HEK293 (cell line): ENCODE measurements at regions of chr10 and their contacts with region 1.

Region 1: DNA sequence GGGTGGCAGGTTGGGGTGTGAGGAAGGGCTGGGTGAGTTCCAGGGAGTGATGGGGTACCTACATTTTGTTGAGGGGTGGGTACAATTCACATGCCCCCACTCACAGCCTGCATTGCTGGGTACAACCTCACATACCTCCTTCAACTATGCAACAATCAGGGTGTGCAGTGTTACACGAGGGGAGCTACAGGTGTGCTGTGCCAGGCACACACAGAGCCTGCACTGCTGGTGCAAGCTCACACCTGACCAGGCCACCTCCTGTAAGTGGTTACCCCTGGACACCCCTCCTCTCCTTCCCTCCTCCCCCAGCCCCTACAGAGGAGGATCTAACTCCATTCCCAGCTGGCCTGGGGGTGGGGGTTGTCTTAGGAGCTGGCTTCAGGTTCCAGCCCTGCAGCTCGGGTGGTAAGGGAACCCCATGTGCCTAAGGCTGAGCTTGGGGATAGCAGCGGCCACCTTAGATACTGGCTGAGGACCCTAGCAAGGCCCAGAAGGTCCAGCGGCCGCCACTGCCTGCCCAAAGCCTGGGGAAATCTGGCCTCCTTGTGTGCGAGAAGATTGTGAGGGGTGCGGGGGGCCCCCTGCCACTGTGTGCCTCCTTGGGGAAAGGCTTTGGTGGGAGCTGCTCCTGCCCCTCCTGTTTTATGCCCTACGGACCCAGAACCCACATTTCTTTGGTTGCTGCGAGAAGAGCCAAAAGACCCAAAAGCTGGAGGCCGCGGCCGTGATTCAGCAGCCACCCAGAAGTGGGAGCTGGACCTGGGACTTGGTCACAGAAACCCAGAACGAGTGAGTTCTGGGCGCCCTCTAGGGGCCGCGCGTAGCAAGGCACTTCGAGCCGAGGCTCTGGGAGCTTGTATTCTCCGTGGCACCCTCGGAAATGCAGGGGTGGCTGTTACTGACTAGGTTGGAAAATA is 10.8 kb downstream of the TLX1 start:
- H3K4me3 ChIP-seq: no peak overlapping the region
- H3K27ac ChIP-seq: no peak overlapping the region
- H3K4me1 ChIP-seq: no peaks in the 10 kb centered on the region
- CTCF ChIP-seq: peak; percentile 88

Region 2: GRCh38 chr10:101031128-101031795 is 110.6 kb before region 1 on chr10 and contains the starts of genes PDZD7 and SFXN3:
- CTCF ChIA-PET with region 1: interaction called, 26 read pairs
- POLR2A ChIA-PET with region 1: no interaction called
- H3K4me3 ChIP-seq: peak within 1 kb of the TSS; percentile 45
- H3K27ac ChIP-seq: peak within 1 kb of the TSS; percentile 64
- H3K4me1 ChIP-seq: peaks cover 20% of the 10 kb centered on the region
- CTCF ChIP-seq: no peak

Region 3: GRCh38 chr10:101060036-101060950 is 81.6 kb before region 1 on chr10:
- CTCF ChIA-PET with region 1: interaction called, 73 read pairs
- POLR2A ChIA-PET with region 1: interaction called, 9 read pairs
- H3K4me3 ChIP-seq: peak overlapping the region; percentile 91
- H3K27ac ChIP-seq: peak overlapping the region; percentile 97
- H3K4me1 ChIP-seq: peaks cover 18% of the 10 kb centered on the region
- CTCF ChIP-seq: peak; percentile 75

Region 4: GRCh38 chr10:101080933-101081931 is 60.6 kb before region 1 on chr10:
- CTCF ChIA-PET with region 1: interaction called, 23 read pairs
- POLR2A ChIA-PET with region 1: no interaction called
- H3K4me3 ChIP-seq: no peak overlapping the region
- H3K27ac ChIP-seq: no peak overlapping the region
- H3K4me1 ChIP-seq: no peaks in the 10 kb centered on the region
- CTCF ChIP-seq: no peak

Region 5: DNA sequence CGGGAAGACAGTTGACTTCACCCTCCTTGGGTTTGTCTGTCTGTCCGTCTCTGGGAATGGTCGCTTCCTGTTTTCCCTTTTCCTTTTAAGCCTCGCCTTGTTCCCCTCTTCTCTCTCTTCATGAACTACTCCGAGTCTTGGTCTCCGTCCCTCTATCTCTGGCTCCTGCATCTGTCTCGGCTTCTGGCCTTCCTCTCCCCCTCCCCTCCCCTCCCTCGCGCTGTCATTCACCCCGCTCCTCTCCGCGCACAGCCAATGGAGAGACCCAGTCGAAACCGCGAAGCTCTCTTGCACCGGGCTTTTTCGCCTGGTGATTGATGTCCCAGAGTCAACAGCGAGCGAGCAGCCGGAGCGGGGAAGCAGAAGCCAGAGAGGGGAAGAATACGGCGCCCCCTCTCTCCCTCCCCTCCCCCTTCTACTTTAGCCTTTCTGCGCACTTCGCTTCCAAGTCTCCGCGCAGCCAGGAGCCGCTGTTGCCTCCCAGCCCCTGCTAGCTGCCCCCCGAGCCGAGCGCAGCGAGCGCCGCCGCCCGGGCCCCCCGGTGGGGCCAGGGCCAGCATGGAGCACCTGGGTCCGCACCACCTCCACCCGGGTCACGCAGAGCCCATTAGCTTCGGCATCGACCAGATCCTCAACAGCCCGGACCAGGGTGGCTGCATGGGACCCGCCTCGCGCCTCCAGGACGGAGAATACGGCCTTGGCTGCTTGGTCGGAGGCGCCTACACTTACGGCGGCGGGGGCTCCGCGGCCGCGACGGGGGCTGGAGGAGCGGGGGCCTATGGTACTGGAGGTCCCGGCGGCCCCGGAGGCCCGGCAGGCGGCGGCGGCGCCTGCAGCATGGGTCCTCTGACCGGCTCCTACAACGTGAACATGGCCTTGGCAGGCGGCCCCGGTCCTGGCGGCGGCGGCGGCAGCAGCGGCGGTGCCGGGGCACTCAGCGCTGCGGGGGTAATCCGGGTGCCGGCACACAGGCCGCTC is 10.6 kb before region 1 on chr10 and contains the start of gene TLX1:
- CTCF ChIA-PET with region 1: interaction called, 26 read pairs
- POLR2A ChIA-PET with region 1: interaction called, 4 read pairs
- H3K4me3 ChIP-seq: peak within 1 kb of the TSS; percentile 51
- H3K27ac ChIP-seq: peak within 1 kb of the TSS; percentile 87
- H3K4me1 ChIP-seq: peaks cover 17% of the 10 kb centered on the region
- CTCF ChIP-seq: peak; percentile 95

Region 6: DNA sequence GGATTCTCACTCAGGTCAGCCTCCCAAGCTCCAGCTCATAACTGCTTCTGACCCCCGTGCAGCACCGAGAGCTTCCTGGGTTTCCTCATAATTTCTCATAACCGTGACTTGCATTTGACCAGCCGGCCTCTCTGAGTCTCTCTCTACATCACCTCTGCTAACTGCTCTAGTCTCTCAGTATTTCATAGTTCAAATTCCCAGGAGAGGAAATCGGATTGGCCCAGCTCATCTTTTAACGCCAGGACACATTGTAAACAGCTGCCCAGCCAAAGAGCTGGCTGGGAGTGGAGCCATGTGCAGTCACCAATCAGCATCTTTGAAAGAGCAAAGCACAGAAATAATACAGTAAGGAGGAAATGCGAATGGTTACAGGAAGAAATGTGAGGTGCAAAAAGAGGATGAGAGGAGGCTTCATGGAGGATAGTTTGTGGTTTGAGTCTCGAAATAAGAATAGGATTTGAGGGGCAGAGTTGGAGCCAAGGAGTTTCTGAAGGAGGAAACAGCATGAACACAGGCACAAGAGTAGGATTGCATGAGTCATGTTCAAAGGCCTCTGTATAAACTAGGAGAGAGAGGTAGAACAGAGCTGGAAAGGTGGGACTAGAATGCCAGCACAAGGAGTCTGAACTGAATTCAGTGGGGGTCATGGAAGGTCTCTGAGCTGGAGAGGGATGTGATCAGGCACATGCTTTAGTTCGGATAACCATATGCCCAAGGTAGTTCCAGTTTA is 102.6 kb after region 1 on chr10:
- CTCF ChIA-PET with region 1: no interaction called
- POLR2A ChIA-PET with region 1: no interaction called
- H3K4me3 ChIP-seq: no peak overlapping the region
- H3K27ac ChIP-seq: no peak overlapping the region
- H3K4me1 ChIP-seq: no peaks in the 10 kb centered on the region
- CTCF ChIP-seq: no peak